GM12878 (cell line): ENCODE measurements at regions of chr13 and their contacts with region 1.

Region 1: DNA sequence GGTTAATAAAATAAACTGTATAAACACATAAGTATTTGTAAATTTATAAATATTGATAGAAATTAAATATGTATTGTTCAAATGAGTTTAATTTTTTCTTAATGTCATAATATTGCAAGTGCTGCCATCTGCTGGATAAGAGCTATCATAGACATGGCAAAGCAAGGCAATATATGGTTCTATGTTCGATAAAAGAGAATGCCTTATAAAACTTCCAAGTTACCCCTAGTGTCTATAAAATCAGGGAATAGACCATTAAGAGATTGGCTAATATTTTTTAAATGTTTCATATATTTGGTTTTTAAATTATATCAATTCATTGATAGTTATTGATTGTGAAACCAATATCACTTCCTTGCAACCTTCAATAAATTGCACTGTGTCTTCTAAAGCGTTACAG is 28.9 kb upstream of the SLITRK6 start:
- DNase-seq: no peak
- ATAC-seq: peak; percentile 51; the same call in 1 of the 3 replicates
- H3K4me3 ChIP-seq: no peak overlapping the region
- H3K27ac ChIP-seq: no peak overlapping the region
- H3K4me1 ChIP-seq: no peaks in the 10 kb centered on the region
- H3K27me3 ChIP-seq: no peaks in the 10 kb centered on the region
- CTCF ChIP-seq: peak; percentile 38 to 58 (median 45); a peak in 4 of 6 replicates
- EP300 ChIP-seq: no peak
- POLR2A ChIP-seq: no peak
- RAD21 ChIP-seq: peak; percentile 30; the same call in 1 of the 2 replicates

Region 2: GRCh38 chr13:84896128-84896527 is 932.0 kb before region 1 on chr13:
- CTCF ChIA-PET with region 1: interaction called, 9 read pairs
- POLR2A ChIA-PET with region 1: no interaction called
- RAD21 ChIA-PET with region 1: interaction called, 4 read pairs
- SMC1A ChIA-PET with region 1: interaction called, 3 read pairs
- in situ Hi-C with region 1: no loop called
- intact Hi-C with region 1: loop called (anchors 1 kb)
- DNase-seq: peak; percentile 1
- ATAC-seq: peak; percentile 70
- H3K4me3 ChIP-seq: no peak overlapping the region
- H3K27ac ChIP-seq: no peak overlapping the region
- H3K4me1 ChIP-seq: no peaks in the 10 kb centered on the region
- H3K27me3 ChIP-seq: no peaks in the 10 kb centered on the region
- CTCF ChIP-seq: peak; percentile 43 to 71 (median 63)
- EP300 ChIP-seq: no peak
- POLR2A ChIP-seq: no peak
- RAD21 ChIP-seq: peak; percentile 80

Region 3: GRCh38 chr13:84917252-84917878 is 910.8 kb before region 1 on chr13:
- CTCF ChIA-PET with region 1: interaction called, 4 read pairs
- POLR2A ChIA-PET with region 1: no interaction called
- RAD21 ChIA-PET with region 1: no interaction called
- SMC1A ChIA-PET with region 1: no interaction called
- in situ Hi-C with region 1: no loop called
- intact Hi-C with region 1: loop called (anchors 5 kb)
- DNase-seq: no peak
- ATAC-seq: peak; percentile 55; the same call in 2 of the 3 replicates
- H3K4me3 ChIP-seq: no peak overlapping the region
- H3K27ac ChIP-seq: no peak overlapping the region
- H3K4me1 ChIP-seq: no peaks in the 10 kb centered on the region
- H3K27me3 ChIP-seq: no peaks in the 10 kb centered on the region
- CTCF ChIP-seq: peak in 1 of 3 experiments; percentile 12; a peak in 2 of 6 replicates
- EP300 ChIP-seq: no peak
- POLR2A ChIP-seq: no peak
- RAD21 ChIP-seq: no peak

Region 4: DNA sequence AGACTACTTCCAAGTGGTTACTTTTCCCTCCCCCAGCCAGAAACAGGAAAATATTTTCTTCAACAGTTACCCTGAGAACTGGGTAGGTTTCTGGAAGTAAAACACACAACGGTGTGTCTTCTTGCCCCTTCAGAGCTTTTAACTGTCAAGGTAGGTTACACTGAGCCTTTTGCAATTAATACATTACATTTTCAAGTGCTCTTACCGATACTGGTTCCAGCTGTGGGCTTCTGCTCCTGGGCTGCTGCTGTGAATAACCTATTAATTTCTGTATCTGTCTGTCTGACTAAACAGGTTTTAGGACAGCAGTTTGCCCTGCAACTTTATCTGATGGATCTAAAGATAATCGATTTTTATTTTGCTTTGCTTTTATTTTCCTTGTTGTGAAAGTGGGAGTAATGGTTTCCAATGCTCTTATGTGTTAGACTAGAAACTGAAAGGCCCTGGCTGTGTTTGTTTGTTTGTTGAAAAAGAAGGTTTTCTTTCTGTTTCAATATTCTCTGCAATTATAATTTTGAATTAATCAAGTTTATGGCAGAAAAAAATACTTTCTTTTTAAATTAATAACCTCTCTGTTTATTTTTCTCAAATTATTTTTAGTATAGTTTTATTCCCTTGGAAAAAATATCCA is 167.8 kb after region 1 on chr13:
- CTCF ChIA-PET with region 1: no interaction called
- POLR2A ChIA-PET with region 1: no interaction called
- RAD21 ChIA-PET with region 1: no interaction called
- SMC1A ChIA-PET with region 1: no interaction called
- in situ Hi-C with region 1: no loop called
- intact Hi-C with region 1: no loop called
- DNase-seq: no peak
- ATAC-seq: peak; percentile 64
- H3K4me3 ChIP-seq: no peak overlapping the region
- H3K27ac ChIP-seq: no peak overlapping the region
- H3K4me1 ChIP-seq: no peaks in the 10 kb centered on the region
- H3K27me3 ChIP-seq: no peaks in the 10 kb centered on the region
- CTCF ChIP-seq: no peak
- EP300 ChIP-seq: no peak
- POLR2A ChIP-seq: no peak
- RAD21 ChIP-seq: no peak